ENCODE measurements at regions of chr5 and their contacts with region 1.

Region 1: GRCh38 chr5:150700594-150701293 is at the start of gene RBM22:
- DNase-seq: peak; percentile 91 to 93
- H3K4me3 ChIP-seq: peak within 1 kb of the TSS; percentile 98
- H3K4me3 Mint-ChIP-seq: no peak within 1 kb of the TSS
- H3K27ac Mint-ChIP-seq: no peak within 1 kb of the TSS
- H3K4me1 ChIP-seq: no peaks in the 10 kb centered on the region
- H3K4me1 Mint-ChIP-seq: no peaks in the 10 kb centered on the region
- H3K27me3 ChIP-seq: no peaks in the 10 kb centered on the region
- H3K27me3 Mint-ChIP-seq: no peaks in the 10 kb centered on the region
- CTCF ChIP-seq: peak; percentile 57 to 72
- total RNA-seq, gene RBM22: 55.3 TPM in 2 replicates

Region 2: DNA sequence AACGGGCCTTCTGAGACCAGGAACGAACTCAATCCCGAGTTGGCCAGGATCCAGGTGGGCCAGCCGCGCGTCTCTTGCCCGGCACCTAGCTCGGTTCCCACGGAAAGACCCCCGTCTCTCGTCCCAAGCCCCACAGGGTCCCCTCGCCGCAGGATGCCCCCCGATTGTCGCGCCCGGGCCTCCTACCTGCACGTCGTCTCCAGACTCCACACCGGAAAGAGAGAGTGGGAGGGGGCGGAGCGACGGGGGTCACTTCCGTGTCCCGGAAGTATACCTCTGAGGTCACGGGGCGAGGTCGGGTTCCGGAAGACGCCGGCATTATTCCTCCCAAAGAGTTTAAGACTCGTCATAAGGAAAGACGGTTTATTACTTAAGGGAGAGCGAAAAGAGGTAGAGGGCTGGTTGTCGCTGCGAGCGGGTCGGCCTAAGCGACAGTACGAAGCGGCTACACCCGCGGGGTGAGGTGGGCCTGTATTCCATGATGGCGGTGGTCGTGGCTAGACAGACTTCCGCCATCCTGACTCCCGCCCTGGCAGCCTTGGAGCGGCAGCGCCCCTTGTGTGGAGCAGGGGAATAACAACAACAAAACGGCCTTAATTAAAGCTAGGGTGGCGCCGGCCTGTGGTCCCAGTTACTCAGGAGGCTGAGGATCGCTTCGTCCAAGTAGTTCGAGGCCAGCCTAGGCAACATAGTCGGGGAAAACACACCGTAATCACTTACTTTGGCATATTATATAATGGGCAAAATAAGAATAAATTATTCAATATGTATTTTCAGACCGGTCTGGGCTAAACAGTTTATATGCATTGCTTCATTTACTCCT is 251.0 kb before region 1 on chr5 and contains the start of gene RPS14:
- CTCF ChIA-PET with region 1: interaction called, 3 read pairs
- POLR2A ChIA-PET with region 1: no interaction called
- intact Hi-C with region 1: loop called (anchors 10 kb)
- DNase-seq: peak; percentile 93 to 95
- H3K4me3 ChIP-seq: peak within 1 kb of the TSS; percentile 66
- H3K4me3 Mint-ChIP-seq: peak within 1 kb of the TSS; percentile 89
- H3K27ac Mint-ChIP-seq: peak within 1 kb of the TSS; percentile 99
- H3K4me1 ChIP-seq: 0 out of 2 replicates have a peak, but pooled peaks cover 4% of the 10 kb centered on the region
- H3K4me1 Mint-ChIP-seq: peaks cover 8% of the 10 kb centered on the region
- H3K27me3 ChIP-seq: no peaks in the 10 kb centered on the region
- H3K27me3 Mint-ChIP-seq: no peaks in the 10 kb centered on the region
- CTCF ChIP-seq: peak; percentile 85 to 92
- total RNA-seq, gene RPS14: 2,300 and 2,382 TPM in 2 replicates

Region 3: GRCh38 chr5:150640311-150641005 is 60.3 kb before region 1 on chr5 and contains the start of gene SYNPO:
- CTCF ChIA-PET with region 1: interaction called, 5 read pairs
- POLR2A ChIA-PET with region 1: interaction called, 5 read pairs
- intact Hi-C with region 1: loop called (anchors 1 kb)
- DNase-seq: peak; percentile 56 to 60
- H3K4me3 ChIP-seq: peak within 1 kb of the TSS; percentile 33
- H3K4me3 Mint-ChIP-seq: peak within 1 kb of the TSS; percentile 61
- H3K27ac Mint-ChIP-seq: peak within 1 kb of the TSS; percentile 79
- H3K4me1 ChIP-seq: peaks cover 80% of the 10 kb centered on the region
- H3K4me1 Mint-ChIP-seq: peaks cover 52% of the 10 kb centered on the region
- H3K27me3 ChIP-seq: no peaks in the 10 kb centered on the region
- H3K27me3 Mint-ChIP-seq: no peaks in the 10 kb centered on the region
- CTCF ChIP-seq: no peak
- total RNA-seq, gene SYNPO: 22.4 and 25.1 TPM in 2 replicates

Region 4: DNA sequence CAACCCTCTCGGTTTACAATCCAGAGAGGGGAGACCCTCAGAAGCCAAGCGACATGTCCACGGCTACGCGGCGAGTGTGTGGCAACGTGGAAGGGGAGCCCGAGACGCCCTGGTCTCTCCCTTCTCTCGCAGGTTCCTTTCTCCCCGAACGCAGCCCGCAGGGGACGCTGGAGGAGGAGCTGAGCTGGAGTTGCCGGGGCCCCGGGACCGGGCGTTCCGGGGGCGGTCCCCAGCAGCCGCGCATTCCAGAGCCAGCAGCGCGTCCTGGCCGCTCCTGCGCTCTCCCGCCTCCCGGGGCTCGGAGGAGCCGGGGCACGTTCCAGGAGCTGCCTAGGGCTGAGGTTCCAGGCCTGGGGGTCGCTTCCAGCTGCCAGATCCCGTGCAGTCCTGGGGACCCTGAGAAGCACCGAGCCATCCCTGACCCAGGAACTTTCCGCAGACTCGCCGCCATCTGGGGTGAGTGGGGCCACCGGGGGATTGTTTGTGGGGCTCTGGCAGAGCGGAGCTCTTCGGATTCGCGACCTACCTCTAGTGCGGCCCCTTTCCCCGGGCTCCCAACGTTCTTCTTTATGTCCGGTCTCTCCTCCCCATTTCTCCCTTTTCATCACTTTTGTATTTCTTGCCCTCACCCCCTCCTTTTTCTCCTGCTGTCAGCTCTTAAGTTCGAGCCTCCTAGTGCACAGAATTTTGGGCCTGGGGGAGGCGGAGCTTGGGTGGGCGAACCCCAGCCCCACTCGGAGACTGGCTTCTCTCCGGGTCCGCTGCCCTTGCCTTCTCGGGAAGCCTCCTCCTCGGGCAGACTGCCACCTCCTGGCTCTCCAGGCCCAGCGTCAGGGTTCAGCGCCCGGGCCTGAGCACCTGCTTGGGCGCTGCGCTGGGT is 78.0 kb after region 1 on chr5 and contains the start of gene SMIM3:
- CTCF ChIA-PET with region 1: interaction called, 18 read pairs
- POLR2A ChIA-PET with region 1: interaction called, 7 read pairs
- intact Hi-C with region 1: loop called (anchors 1 kb)
- DNase-seq: peak; percentile 86 to 89
- H3K4me3 ChIP-seq: peak within 1 kb of the TSS; percentile 75
- H3K4me3 Mint-ChIP-seq: peak within 1 kb of the TSS; percentile 91
- H3K27ac Mint-ChIP-seq: peak within 1 kb of the TSS; percentile 80
- H3K4me1 ChIP-seq: peaks cover 34% of the 10 kb centered on the region
- H3K4me1 Mint-ChIP-seq: peaks cover 32% of the 10 kb centered on the region
- H3K27me3 ChIP-seq: no peaks in the 10 kb centered on the region
- H3K27me3 Mint-ChIP-seq: no peaks in the 10 kb centered on the region
- CTCF ChIP-seq: peak; percentile 35 to 83
- total RNA-seq, gene SMIM3: 19.2 and 19.4 TPM in 2 replicates

Measured in Caco-2 (cell line).